Activated CD4-positive, alpha-beta T cell treated with anti-CD3 and anti-CD28 coated beads for 36 hours (primary cell): ENCODE measurements at regions of chrX and their contacts with region 1.

Region 1: DNA sequence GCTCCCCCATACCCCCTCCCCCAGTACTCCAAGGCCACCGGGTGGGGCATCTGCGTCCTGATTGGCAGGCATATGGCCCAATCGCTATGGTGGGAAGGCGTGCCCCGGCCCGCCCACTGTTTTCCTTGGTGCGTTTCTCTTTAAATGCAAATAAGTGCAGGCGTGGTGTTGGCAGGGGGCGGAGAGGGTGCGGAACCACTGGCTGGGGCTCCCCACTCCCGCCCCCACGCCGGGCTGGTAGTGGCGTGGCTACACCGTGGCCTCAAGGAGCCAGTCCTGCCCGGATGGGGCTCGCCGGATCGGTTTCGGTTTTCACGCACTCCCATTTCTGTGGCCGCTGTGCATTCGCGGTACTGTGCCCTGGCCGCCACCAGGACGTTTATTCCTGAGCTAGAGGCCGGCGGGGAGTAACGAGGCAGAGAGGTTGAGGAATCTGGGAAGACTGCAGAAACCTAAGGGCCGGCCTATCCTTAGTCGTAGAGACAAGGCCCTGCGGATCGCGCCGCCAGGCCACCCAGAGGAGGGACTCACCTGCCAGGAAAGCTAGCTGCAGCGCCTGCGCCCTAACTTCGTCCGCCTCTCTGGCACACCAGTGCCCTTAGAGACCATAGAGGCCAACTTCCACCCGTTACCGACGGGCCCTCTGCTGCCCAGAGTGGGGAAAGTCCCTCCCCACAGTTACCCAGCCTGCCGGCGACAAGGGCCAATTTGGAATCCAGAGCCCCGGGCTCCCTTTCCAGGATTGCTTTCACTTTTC is 405 bp upstream of the AMER1 start:
- DNase-seq: peak; percentile 91
- ATAC-seq: peak; percentile 89
- H3K4me3 Mint-ChIP-seq: peak overlapping the region; percentile 75
- H3K27ac Mint-ChIP-seq: peak overlapping the region; percentile 87
- H3K4me1 Mint-ChIP-seq: peaks cover 13% of the 10 kb centered on the region
- H3K27me3 Mint-ChIP-seq: no peaks in the 10 kb centered on the region

Region 2: GRCh38 chrX:63560601-63561218 is 645.2 kb before region 1 on chrX:
- CTCF ChIA-PET with region 1: no interaction called
- POLR2A ChIA-PET with region 1: no interaction called
- intact Hi-C with region 1: loop called in 1 of 2 experiments (anchors 1 kb)
- DNase-seq: peak; percentile 70
- ATAC-seq: peak; percentile 94
- H3K4me3 Mint-ChIP-seq: peak overlapping the region; percentile 95
- H3K27ac Mint-ChIP-seq: peak overlapping the region; percentile 92
- H3K4me1 Mint-ChIP-seq: peaks cover 16% of the 10 kb centered on the region
- H3K27me3 Mint-ChIP-seq: no peaks in the 10 kb centered on the region

Region 3: DNA sequence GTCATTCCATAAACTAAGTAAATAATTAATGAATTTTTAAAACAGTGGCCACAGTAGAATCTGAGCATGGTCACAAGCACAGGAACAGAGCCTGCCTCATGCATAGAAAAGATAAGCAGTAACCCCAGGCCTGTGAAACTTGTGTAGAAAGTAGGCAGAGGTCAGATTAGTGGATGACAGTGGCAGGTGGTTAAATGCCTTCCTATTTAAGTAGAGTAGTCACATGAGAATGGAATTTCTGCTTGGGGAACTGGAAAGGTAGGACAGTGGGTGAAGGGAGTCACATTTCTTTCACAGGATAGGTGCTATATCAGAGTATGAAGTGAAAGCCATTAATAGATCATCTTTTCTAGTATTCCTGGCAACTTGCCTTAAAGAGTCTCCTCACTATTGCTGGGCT is 59.3 kb after region 1 on chrX:
- CTCF ChIA-PET with region 1: no interaction called
- POLR2A ChIA-PET with region 1: no interaction called
- intact Hi-C with region 1: loop called in 1 of 2 experiments (anchors 10 kb)
- DNase-seq: no peak
- ATAC-seq: no peak
- H3K4me3 Mint-ChIP-seq: no peak overlapping the region
- H3K27ac Mint-ChIP-seq: no peak overlapping the region
- H3K4me1 Mint-ChIP-seq: no peaks in the 10 kb centered on the region
- H3K27me3 Mint-ChIP-seq: no peaks in the 10 kb centered on the region

Region 4: DNA sequence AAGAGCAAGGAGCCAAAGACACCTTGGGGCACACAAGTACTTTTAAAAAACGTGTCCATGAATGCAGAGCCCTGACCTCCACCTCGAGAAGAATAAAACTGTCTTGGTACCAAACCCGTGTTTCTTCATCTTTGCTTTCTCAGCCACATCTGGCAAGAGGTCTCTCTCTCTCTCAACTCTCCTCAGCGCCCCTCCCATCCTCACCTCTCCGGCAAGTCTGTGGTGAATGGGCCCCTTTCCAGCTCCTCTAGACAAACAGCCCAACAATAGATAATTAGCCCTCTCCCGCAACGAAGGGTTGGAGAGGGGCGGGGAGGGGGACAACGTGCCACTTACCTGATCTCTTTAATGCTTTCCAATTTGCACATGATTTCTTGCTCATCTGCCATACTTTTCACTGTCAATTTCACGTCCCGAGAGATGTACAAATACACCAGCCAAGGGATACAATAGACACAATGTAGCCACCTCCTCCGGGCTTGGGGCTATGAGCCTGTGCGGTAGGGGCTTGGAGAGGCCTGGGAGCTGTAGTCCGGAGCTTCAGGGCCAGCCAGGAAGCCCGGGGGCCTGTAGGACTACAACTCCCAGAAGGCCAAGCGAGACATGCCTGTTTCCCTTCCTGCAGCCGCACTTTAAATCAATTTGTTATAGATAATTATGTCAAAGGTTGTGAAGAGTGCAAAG is 770.2 kb after region 1 on chrX and contains the start of gene ZC4H2:
- CTCF ChIA-PET with region 1: no interaction called
- POLR2A ChIA-PET with region 1: no interaction called
- intact Hi-C with region 1: loop called in 1 of 2 experiments (anchors 1 kb)
- DNase-seq: peak; percentile 81
- ATAC-seq: peak; percentile 99
- H3K4me3 Mint-ChIP-seq: peak within 1 kb of the TSS; percentile 94
- H3K27ac Mint-ChIP-seq: peak within 1 kb of the TSS; percentile 81
- H3K4me1 Mint-ChIP-seq: peaks cover 18% of the 10 kb centered on the region
- H3K27me3 Mint-ChIP-seq: no peaks in the 10 kb centered on the region
- total RNA-seq, gene ZC4H2: 14.7 to 18.8 TPM

Region 5: DNA sequence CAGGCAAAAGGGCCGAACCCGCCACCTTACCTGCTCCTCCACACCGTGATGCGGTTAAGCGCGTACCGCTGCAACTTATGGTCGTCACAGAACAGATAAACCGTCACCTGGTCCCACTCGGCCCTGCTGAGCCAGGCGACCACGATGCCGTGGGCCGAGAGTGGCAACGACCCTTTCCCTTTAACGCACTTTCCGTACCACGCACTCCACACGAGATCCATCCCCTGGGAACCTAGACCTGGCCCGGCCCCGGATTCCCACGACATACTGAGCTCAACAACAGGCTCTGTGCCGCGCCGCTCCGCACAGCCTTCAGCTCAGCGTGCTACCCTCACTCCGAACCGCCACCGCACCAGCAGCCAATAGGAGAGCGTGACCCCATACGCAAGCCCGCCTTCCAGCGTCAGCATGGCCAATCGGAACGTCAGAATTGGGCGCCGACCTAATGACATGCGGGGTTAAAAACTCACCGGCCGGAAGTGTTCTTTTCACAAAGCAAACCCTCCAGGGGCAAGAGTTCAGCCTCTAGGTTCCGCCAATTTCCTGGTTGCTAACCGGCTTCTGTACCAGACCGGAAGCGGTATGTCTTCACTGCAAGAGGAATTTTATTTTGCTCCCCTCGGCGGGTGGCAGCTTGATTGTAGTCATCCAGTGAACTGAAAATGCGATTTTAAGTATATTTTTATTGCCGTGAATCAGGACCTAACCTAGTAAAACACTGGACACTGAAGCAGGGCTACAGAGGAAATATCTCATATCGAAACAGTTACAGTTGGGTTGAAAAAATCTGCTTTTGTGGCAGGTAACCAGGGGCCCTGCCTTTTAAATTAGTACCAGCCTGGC is 1328.8 kb after region 1 on chrX and contains the start of gene LAS1L:
- CTCF ChIA-PET with region 1: no interaction called
- POLR2A ChIA-PET with region 1: no interaction called
- intact Hi-C with region 1: loop called in 1 of 2 experiments (anchors 2 kb)
- DNase-seq: peak; percentile 93
- ATAC-seq: peak; percentile 100
- H3K4me3 Mint-ChIP-seq: peak within 1 kb of the TSS; percentile 99
- H3K27ac Mint-ChIP-seq: peak within 1 kb of the TSS; percentile 96
- H3K4me1 Mint-ChIP-seq: peaks cover 19% of the 10 kb centered on the region
- H3K27me3 Mint-ChIP-seq: no peaks in the 10 kb centered on the region
- total RNA-seq, gene LAS1L: 56.4 to 64.0 TPM